A549 (cell line): ENCODE measurements at regions of chr9 and their contacts with region 1.

Region 1: DNA sequence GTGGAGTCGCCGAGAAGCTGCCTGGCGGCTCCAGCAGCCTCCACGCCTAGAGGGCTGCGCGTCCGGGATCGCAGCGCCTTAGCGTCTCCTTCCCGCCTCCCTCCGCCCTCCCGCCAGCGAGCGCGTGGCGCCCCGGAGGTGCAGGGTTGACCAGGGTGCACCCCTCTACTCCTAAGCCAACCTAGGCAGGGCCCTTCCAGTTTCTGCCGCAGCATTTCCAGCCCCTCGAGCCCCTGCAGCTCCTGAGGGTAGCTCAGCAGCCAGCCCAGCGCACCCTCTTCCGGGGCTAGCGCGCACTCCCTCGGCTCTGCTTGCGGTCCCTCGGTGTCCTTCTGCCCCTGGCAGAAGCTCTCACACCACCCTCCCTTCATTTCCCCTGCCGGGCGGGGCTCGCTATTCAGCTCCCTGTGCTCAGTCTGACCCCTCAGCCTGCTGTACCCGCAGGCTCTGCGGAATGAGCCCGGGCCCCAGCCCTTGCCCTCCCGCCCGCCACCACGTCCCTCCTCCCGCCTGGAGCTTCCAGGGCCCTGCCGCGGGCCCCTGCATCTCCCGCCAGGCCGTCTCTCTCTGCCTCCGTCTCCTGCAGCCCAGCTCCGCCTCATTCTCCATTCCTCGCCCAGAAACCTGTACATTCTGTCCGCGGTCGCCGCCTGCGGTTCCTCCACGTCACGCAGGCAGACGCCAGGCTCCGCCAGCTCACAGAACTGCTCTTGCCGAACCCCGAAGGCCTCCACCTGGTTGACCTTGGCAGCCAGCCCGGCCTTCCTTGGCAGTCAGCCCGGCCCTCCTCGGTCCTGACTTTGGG is 61.8 kb downstream of the SPATA31C2 start:
- DNase-seq: peak; percentile 82 to 87
- ATAC-seq: peak; percentile 92 to 94
- H3K4me3 ChIP-seq: peak overlapping the region; percentile 43
- H3K27ac ChIP-seq: peak overlapping the region; percentile 88 to 92
- H3K4me1 ChIP-seq: peaks cover 20% of the 10 kb centered on the region
- CTCF ChIP-seq: peak; percentile 35
- EP300 ChIP-seq: no peak
- POLR2A ChIP-seq: peak; percentile 49
- RAD21 ChIP-seq: peak in 1 of 2 experiments; percentile 60; a peak in 4 of 5 replicates

Region 2: GRCh38 chr9:87973730-87974292 is 102.7 kb before region 1 on chr9:
- CTCF ChIA-PET with region 1: interaction called, 4 read pairs
- POLR2A ChIA-PET with region 1: interaction called, 10 read pairs
- DNase-seq: no peak
- ATAC-seq: peak; percentile 22 to 27; a peak in 4 of 6 replicates
- H3K4me3 ChIP-seq: peak overlapping the region; percentile 60
- H3K27ac ChIP-seq: peak overlapping the region; percentile 65 to 89
- H3K4me1 ChIP-seq: peaks cover 10% of the 10 kb centered on the region
- CTCF ChIP-seq: no peak
- EP300 ChIP-seq: no peak
- POLR2A ChIP-seq: no peak
- RAD21 ChIP-seq: no peak

Region 3: DNA sequence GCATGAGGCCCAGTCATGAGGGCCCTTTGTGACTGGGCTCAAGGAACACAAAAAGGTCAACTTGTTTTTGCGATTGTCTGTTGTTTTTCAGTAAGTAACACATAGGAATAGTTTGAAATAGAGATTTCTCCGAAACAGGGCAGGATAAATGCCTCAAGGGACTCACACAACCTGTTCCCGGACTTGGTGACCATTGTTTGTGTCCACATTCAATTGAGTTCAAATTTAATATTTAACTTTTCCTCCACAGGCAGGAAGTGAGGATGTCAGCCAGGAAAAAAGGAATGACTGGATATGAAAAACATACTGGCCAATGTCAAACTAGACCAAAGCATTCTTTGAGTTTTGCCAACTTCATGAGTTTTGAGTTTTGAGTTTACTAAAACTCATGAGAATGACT is 10.9 kb before region 1 on chr9:
- CTCF ChIA-PET with region 1: interaction called, 10 read pairs
- POLR2A ChIA-PET with region 1: interaction called, 4 read pairs
- DNase-seq: no peak
- ATAC-seq: no peak
- H3K4me3 ChIP-seq: no peak overlapping the region
- H3K27ac ChIP-seq: no peak overlapping the region
- H3K4me1 ChIP-seq: 0 out of 3 replicates have a peak, but pooled peaks cover 4% of the 10 kb centered on the region
- CTCF ChIP-seq: no peak
- EP300 ChIP-seq: no peak
- POLR2A ChIP-seq: no peak
- RAD21 ChIP-seq: no peak

Region 4: DNA sequence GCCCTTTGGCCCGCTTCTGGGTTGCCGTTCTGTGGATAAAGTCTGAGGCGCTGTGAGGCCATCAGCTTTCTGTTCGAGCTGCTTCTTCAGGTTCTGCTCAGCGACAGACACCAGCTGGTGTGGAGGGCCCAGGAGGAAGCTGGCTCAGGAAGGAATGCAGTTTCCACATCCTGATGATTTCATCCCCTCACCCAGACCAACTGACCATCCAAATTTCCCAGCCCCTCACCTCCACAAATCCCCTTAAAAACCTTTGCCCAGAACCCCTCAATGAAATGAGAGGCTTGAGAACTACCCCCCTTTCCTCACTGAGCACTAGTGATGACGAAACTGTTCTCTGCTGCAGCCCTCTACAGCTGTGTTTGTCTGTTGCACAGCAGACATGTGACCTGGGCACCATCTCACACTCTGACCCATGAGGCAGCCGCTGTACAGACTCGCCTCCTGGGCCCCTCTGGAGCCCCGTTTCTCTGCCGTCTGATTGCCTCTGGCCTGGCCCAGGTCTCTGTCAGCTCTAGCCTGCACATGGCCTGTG is 16.4 kb after region 1 on chr9:
- CTCF ChIA-PET with region 1: interaction called, 20 read pairs
- POLR2A ChIA-PET with region 1: interaction called, 3 read pairs
- DNase-seq: no peak
- ATAC-seq: peak; percentile 43 to 68; a peak in 4 of 6 replicates
- H3K4me3 ChIP-seq: no peak overlapping the region
- H3K27ac ChIP-seq: no peak overlapping the region; a peak in 1 of 6 replicates
- H3K4me1 ChIP-seq: peaks cover 4% of the 10 kb centered on the region; the same call in 1 of the 3 replicates
- CTCF ChIP-seq: no peak
- EP300 ChIP-seq: no peak
- POLR2A ChIP-seq: no peak
- RAD21 ChIP-seq: no peak

Region 5: DNA sequence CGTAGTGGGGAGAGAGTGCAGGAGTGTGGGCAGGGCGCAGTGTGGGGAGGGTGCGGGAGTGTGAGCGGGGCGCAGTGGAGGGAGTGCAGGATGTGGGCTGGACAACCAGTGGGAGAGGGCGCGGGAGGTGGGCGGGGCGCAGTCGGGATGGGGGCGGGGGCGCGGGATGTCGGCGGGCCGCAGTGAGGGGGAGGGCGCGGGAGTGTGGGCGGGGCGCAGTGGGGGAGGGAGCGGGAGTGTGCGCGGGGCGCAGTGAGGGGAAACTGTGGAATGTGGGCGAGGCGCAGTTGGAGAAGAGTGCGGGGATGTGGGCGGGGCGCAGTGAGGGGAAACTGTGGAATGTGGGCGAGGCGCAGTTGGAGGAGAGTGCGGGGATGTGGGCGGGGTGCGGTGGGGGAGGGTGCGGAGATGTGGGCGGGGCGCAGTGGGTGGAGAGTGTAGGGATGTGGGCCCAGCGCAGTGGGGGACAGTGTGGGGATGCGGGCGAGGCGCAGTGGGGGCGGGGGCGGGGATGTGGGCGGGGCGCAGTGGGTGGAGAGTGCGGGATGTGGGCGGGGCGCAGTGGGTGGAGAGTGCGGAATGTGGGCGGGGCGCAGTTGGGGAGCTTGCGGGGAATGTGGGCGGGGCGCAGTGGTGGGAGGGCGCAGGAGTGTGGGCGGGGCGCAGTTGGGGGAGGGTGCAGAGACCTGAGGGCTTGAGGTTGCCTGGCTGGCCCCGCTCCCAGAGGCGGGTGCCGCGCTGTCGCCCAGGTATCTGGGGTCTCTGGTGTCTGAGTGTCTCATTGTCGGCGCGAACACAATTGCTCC is 458.2 kb after region 1 on chr9 and contains the start of gene NXNL2:
- CTCF ChIA-PET with region 1: interaction called, 9 read pairs
- POLR2A ChIA-PET with region 1: interaction called, 11 read pairs
- DNase-seq: peak; percentile 74 to 93
- ATAC-seq: peak; percentile 76 to 84
- H3K4me3 ChIP-seq: peak within 1 kb of the TSS; percentile 68
- H3K27ac ChIP-seq: peak within 1 kb of the TSS; percentile 93 to 100
- H3K4me1 ChIP-seq: peaks cover 41% of the 10 kb centered on the region
- CTCF ChIP-seq: no peak
- EP300 ChIP-seq: peak in 1 of 2 experiments; percentile 15; a peak in 1 of 5 replicates
- POLR2A ChIP-seq: peak; percentile 27
- RAD21 ChIP-seq: no peak
- polyA plus RNA-seq, gene NXNL2: 1.1 and 1.4 TPM in 2 replicates